ENCODE measurements at regions of chr2 and their contacts with region 1.

Region 1: GRCh38 chr2:144516981-144517865 is 2.7 kb downstream of the ZEB2 start:
- DNase-seq: peak; percentile 57
- H3K4me3 Mint-ChIP-seq: no peak overlapping the region
- H3K27ac Mint-ChIP-seq: peak overlapping the region; percentile 99
- H3K4me1 Mint-ChIP-seq: peaks cover 25% of the 10 kb centered on the region
- H3K27me3 Mint-ChIP-seq: peaks cover 25% of the 10 kb centered on the region

Region 2: GRCh38 chr2:144084114-144084661 is 433.0 kb before region 1 on chr2:
- intact Hi-C with region 1: loop called (anchors 5 kb)
- DNase-seq: no peak
- H3K4me3 Mint-ChIP-seq: no peak overlapping the region
- H3K27ac Mint-ChIP-seq: peak overlapping the region; percentile 23
- H3K4me1 Mint-ChIP-seq: peaks cover 31% of the 10 kb centered on the region
- H3K27me3 Mint-ChIP-seq: no peaks in the 10 kb centered on the region

Region 3: GRCh38 chr2:144230448-144231085 is 286.7 kb before region 1 on chr2:
- intact Hi-C with region 1: loop called (anchors 5 kb)
- DNase-seq: no peak
- H3K4me3 Mint-ChIP-seq: no peak overlapping the region
- H3K27ac Mint-ChIP-seq: peak overlapping the region; percentile 31
- H3K4me1 Mint-ChIP-seq: peaks cover 65% of the 10 kb centered on the region
- H3K27me3 Mint-ChIP-seq: no peaks in the 10 kb centered on the region

Region 4: DNA sequence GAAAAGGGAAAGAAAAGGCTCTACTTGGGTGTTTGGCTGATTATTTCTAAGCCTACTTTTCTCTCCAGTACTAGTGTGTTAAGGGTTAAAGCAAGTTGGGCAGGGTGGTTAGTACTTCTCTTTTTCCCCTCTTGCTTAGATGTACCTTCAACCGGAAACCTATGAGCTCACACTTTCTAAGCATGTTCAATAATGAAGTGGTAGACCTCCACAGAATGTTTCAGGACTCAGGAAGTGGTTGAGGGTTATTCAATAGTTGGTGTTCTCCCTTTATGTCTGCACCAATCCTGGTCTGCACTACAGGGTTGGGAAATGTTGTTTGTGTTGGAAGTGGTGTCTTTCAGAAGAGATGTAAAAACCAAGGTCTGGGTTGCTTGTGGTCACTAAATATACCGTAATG is 134.4 kb before region 1 on chr2:
- intact Hi-C with region 1: loop called (anchors 2 kb)
- DNase-seq: no peak
- H3K4me3 Mint-ChIP-seq: no peak overlapping the region
- H3K27ac Mint-ChIP-seq: peak overlapping the region; percentile 39
- H3K4me1 Mint-ChIP-seq: peaks cover 51% of the 10 kb centered on the region
- H3K27me3 Mint-ChIP-seq: peaks cover 2% of the 10 kb centered on the region

Region 5: DNA sequence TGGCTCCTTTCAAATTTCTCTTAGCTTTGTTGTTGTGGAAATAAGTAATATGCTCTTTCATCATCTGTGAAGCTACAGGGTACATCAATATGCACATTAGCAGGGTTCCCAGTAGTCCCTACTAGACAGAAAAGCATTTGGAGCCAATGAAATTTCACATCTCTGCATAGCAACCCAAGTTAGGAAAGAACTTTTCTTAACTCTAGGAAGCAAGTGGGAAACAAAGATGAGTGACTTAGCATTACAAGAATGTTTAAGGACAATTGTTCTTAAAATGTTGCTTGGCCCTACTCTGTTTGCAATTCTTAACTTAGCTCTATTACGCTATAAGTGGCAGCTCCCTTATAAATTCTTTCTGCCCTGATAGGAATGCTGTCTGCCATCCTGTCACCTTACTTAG is 36.9 kb before region 1 on chr2:
- intact Hi-C with region 1: loop called (anchors 5 kb)
- DNase-seq: no peak
- H3K4me3 Mint-ChIP-seq: no peak overlapping the region
- H3K27ac Mint-ChIP-seq: no peak overlapping the region
- H3K4me1 Mint-ChIP-seq: peaks cover 35% of the 10 kb centered on the region
- H3K27me3 Mint-ChIP-seq: no peaks in the 10 kb centered on the region

Region 6: DNA sequence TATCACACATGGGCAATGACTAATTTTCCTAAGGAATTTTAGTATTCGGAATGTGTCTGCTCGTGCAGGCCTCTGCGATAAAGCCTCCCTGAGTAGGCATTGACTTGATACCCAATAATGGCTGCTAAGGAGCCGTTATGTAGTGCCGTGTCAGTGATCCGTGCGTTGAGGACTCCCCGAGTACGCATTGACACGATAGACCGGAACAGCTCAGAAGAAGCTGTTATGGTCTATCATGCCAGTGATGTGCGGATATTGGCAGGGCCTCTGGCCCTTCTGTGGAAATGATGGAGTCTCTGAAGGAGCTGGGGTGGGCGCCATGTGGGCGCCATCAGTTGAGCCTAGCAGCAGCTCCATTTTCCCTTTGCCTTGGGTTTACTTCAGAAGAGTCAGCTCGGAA is 26.4 kb before region 1 on chr2:
- intact Hi-C with region 1: no loop called
- DNase-seq: no peak
- H3K4me3 Mint-ChIP-seq: no peak overlapping the region
- H3K27ac Mint-ChIP-seq: no peak overlapping the region
- H3K4me1 Mint-ChIP-seq: peaks cover 32% of the 10 kb centered on the region
- H3K27me3 Mint-ChIP-seq: peaks cover 1% of the 10 kb centered on the region

Region 7: GRCh38 chr2:144572977-144573376 is 55.8 kb after region 1 on chr2:
- intact Hi-C with region 1: loop called (anchors 5 kb)
- DNase-seq: no peak
- H3K4me3 Mint-ChIP-seq: no peak overlapping the region
- H3K27ac Mint-ChIP-seq: no peak overlapping the region
- H3K4me1 Mint-ChIP-seq: peaks cover 24% of the 10 kb centered on the region
- H3K27me3 Mint-ChIP-seq: peaks cover 21% of the 10 kb centered on the region

Region 8: DNA sequence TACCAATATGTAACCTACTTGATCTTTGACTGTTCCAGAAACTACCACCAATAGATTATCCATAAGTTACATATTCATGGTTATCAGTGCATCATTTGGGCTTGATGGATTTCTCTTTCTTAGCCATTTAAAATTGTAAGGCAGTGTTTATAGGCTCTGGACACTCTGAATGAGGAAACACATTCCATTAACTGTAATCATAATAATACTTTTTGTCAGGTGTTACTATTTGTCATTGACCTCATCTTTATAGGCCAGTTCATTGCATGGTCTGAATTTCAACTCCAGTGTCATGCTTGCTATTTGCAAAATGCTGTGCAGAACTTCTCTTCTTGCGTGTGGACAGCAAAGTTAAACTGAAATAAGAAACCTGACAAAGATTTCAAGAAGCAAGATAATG is 1342.9 kb after region 1 on chr2:
- intact Hi-C with region 1: no loop called
- DNase-seq: no peak
- H3K4me3 Mint-ChIP-seq: no peak overlapping the region
- H3K27ac Mint-ChIP-seq: no peak overlapping the region
- H3K4me1 Mint-ChIP-seq: no peaks in the 10 kb centered on the region
- H3K27me3 Mint-ChIP-seq: no peaks in the 10 kb centered on the region